K562 (cell line): ENCODE measurements at regions of chr5 and their contacts with region 1.

Region 1: DNA sequence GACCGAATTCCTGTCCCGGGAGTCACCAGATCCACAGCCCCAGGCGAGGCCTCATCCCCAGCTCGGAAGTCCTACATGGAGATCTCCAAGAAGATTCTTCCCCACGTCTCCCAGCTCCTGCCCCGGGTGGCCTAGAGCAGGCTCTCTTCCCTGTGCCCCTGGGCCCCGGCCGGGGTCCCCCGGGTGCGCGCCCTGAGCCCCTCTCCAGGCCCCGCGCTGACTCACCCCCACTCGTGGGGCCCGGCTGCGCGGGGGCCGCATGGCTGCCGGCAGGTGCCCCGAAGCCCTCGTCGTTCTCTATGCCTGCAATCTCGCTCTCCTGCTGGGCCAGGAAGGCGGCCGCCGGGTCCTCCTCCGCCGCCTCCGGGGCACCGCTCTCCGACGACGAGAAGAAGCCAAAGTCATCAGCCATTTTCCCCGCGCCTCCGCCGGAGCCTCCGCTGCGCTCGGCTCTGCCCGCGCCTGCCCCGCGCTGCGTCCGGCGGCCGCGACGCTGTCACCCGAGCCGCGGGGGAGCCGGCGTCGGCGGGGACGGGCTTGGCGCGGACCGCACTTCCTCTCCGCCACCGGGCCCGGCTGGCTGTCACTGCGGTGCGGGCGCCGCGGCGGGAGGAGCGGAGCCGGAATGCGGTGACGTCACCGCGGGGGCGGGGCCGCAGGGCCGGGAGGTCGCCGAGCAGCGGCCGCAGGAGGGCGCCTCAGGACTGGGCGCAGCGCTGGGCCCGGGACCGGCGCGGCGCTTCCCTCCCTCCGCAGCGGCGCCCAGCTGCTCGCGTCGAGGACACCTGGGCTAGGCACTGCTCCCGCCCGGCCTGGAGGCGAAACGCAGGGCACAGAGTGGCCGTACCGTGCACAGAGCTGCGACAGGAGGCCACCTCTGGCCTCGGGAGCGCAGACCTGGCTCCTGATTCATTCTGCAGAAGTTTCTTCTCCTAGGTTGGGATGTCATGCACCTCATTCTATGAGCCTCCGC is at the start of gene CLTB:
- DNase-seq: peak; percentile 92 to 95 (median 92)
- ATAC-seq: peak; percentile 98
- H3K4me3 ChIP-seq: peak within 1 kb of the TSS; percentile 89
- H3K27ac ChIP-seq: peak within 1 kb of the TSS; percentile 83
- H3K4me1 ChIP-seq: peaks cover 12 to 17% of the 10 kb centered on the region in 2 experiments; a peak in 4 of 5 replicates
- H3K27me3 ChIP-seq: no peaks in the 10 kb centered on the region
- CTCF ChIP-seq: peak; percentile 59 to 95 (median 94); a peak in 5 of 6 replicates
- EP300 ChIP-seq: no peak
- POLR2A ChIP-seq: no peak
- RAD21 ChIP-seq: peak; percentile 96 to 97
- polyA plus RNA-seq, gene CLTB: 1.8 to 3.5 TPM

Region 2: GRCh38 chr5:176373100-176373818 is 43.0 kb before region 1 on chr5:
- CTCF ChIA-PET with region 1: no interaction called
- POLR2A ChIA-PET with region 1: no interaction called
- in situ Hi-C with region 1: no loop called
- intact Hi-C with region 1: no loop called
- DNase-seq: peak in 2 of 4 experiments; percentile 43 to 49
- ATAC-seq: peak; percentile 79
- H3K4me3 ChIP-seq: no peak overlapping the region
- H3K27ac ChIP-seq: no peak overlapping the region
- H3K4me1 ChIP-seq: peaks cover 7 to 19% of the 10 kb centered on the region in 2 experiments
- H3K27me3 ChIP-seq: no peaks in the 10 kb centered on the region
- CTCF ChIP-seq: no peak
- EP300 ChIP-seq: no peak
- POLR2A ChIP-seq: no peak
- RAD21 ChIP-seq: no peak

Region 3: GRCh38 chr5:176447982-176448608 is 31.9 kb after region 1 on chr5 and contains the start of gene FAF2:
- CTCF ChIA-PET with region 1: no interaction called
- POLR2A ChIA-PET with region 1: interaction called, 4 read pairs
- in situ Hi-C with region 1: no loop called
- intact Hi-C with region 1: loop called (anchors 1 kb)
- DNase-seq: peak; percentile 98 to 99 (median 98)
- ATAC-seq: peak; percentile 97
- H3K4me3 ChIP-seq: peak within 1 kb of the TSS; percentile 88
- H3K27ac ChIP-seq: peak within 1 kb of the TSS; percentile 98
- H3K4me1 ChIP-seq: peaks cover 6 to 21% of the 10 kb centered on the region in 2 experiments; a peak in 4 of 5 replicates
- H3K27me3 ChIP-seq: no peaks in the 10 kb centered on the region
- CTCF ChIP-seq: peak; percentile 83 to 98 (median 96)
- EP300 ChIP-seq: peak; percentile 51; the same call in 1 of the 2 replicates
- POLR2A ChIP-seq: peak; percentile 92
- RAD21 ChIP-seq: no peak
- polyA plus RNA-seq, gene FAF2: 25.2 to 32.8 TPM

Region 4: DNA sequence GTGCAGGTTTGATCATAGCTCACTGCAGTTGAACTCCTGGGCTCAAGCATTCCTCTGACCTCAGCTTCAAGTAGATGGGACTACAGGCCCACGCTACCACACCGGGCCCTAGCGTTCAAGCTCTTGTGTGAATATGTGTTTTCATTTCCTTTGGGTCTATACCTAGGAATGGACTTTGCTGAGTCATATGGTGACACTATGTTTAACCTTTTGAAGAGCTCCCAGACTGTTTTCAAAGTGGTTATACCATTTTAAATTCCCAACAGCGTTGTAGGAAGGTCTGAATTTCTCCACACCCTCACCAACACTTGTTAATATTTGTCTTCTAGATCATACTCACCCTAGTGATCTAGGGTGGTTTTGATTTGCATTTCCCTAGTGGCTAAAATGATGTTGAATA is 65.5 kb after region 1 on chr5:
- CTCF ChIA-PET with region 1: no interaction called
- POLR2A ChIA-PET with region 1: no interaction called
- in situ Hi-C with region 1: no loop called
- intact Hi-C with region 1: loop called (anchors 10 kb)
- DNase-seq: peak in 2 of 4 experiments; percentile 42 to 77
- ATAC-seq: peak; percentile 98
- H3K4me3 ChIP-seq: no peak overlapping the region
- H3K27ac ChIP-seq: peak overlapping the region; percentile 76
- H3K4me1 ChIP-seq: peaks cover 0 to 4% of the 10 kb centered on the region in 2 experiments; a peak in 2 of 5 replicates
- H3K27me3 ChIP-seq: no peaks in the 10 kb centered on the region
- CTCF ChIP-seq: peak in 2 of 3 experiments; percentile 18 to 33; a peak in 2 of 6 replicates
- EP300 ChIP-seq: no peak
- POLR2A ChIP-seq: no peak
- RAD21 ChIP-seq: 0 out of 4 replicates have a peak, but pooled peaks of 1 of the 2 experiments have one; percentile 8

Region 5: GRCh38 chr5:176543428-176544173 is 127.4 kb after region 1 on chr5:
- CTCF ChIA-PET with region 1: interaction called, 7 read pairs
- POLR2A ChIA-PET with region 1: interaction called, 4 read pairs
- in situ Hi-C with region 1: no loop called
- intact Hi-C with region 1: loop called (anchors 2 kb)
- DNase-seq: peak; percentile 77 to 89 (median 80)
- ATAC-seq: peak; percentile 78
- H3K4me3 ChIP-seq: peak overlapping the region; percentile 51
- H3K27ac ChIP-seq: peak overlapping the region; percentile 94
- H3K4me1 ChIP-seq: peaks cover 36 to 45% of the 10 kb centered on the region in 2 experiments
- H3K27me3 ChIP-seq: no peaks in the 10 kb centered on the region
- CTCF ChIP-seq: no peak
- EP300 ChIP-seq: no peak
- POLR2A ChIP-seq: peak; percentile 74
- RAD21 ChIP-seq: no peak

Region 6: GRCh38 chr5:176565760-176566288 is 149.6 kb after region 1 on chr5:
- CTCF ChIA-PET with region 1: interaction called, 11 read pairs
- POLR2A ChIA-PET with region 1: interaction called, 3 read pairs
- in situ Hi-C with region 1: no loop called
- intact Hi-C with region 1: loop called (anchors 2 kb)
- DNase-seq: no peak
- ATAC-seq: no peak
- H3K4me3 ChIP-seq: no peak overlapping the region
- H3K27ac ChIP-seq: no peak overlapping the region
- H3K4me1 ChIP-seq: peaks cover 0 to 16% of the 10 kb centered on the region in 2 experiments; a peak in 3 of 5 replicates
- H3K27me3 ChIP-seq: peaks cover 16 to 60% of the 10 kb centered on the region in 2 experiments; a peak in 4 of 5 replicates
- CTCF ChIP-seq: no peak
- EP300 ChIP-seq: no peak
- POLR2A ChIP-seq: no peak
- RAD21 ChIP-seq: peak in 1 of 2 experiments; percentile 27; a peak in 2 of 4 replicates

Region 7: GRCh38 chr5:176573564-176574296 is 157.5 kb after region 1 on chr5:
- CTCF ChIA-PET with region 1: interaction called, 5 read pairs
- POLR2A ChIA-PET with region 1: interaction called, 3 read pairs
- in situ Hi-C with region 1: no loop called
- intact Hi-C with region 1: loop called (anchors 2 kb)
- DNase-seq: peak; percentile 84 to 87 (median 86)
- ATAC-seq: peak; percentile 94
- H3K4me3 ChIP-seq: no peak overlapping the region
- H3K27ac ChIP-seq: no peak overlapping the region
- H3K4me1 ChIP-seq: peaks cover 0 to 34% of the 10 kb centered on the region in 2 experiments; a peak in 3 of 5 replicates
- H3K27me3 ChIP-seq: peaks cover 13 to 24% of the 10 kb centered on the region in 2 experiments; a peak in 3 of 5 replicates
- CTCF ChIP-seq: peak; percentile 85 to 91 (median 90)
- EP300 ChIP-seq: no peak
- POLR2A ChIP-seq: no peak
- RAD21 ChIP-seq: peak; percentile 69 to 90

Region 8: GRCh38 chr5:176619203-176619568 is 202.9 kb after region 1 on chr5:
- CTCF ChIA-PET with region 1: no interaction called
- POLR2A ChIA-PET with region 1: no interaction called
- in situ Hi-C with region 1: no loop called
- intact Hi-C with region 1: loop called (anchors 5 kb)
- DNase-seq: peak; percentile 96 to 99 (median 98)
- ATAC-seq: peak; percentile 99
- H3K4me3 ChIP-seq: peak overlapping the region; percentile 19
- H3K27ac ChIP-seq: no peak overlapping the region
- H3K4me1 ChIP-seq: peaks cover 8 to 34% of the 10 kb centered on the region in 2 experiments
- H3K27me3 ChIP-seq: peaks cover 19 to 55% of the 10 kb centered on the region in 2 experiments
- CTCF ChIP-seq: peak; percentile 71 to 81 (median 81)
- EP300 ChIP-seq: no peak
- POLR2A ChIP-seq: no peak
- RAD21 ChIP-seq: peak; percentile 81 to 83